ENCODE measurements at regions of chr20 and their contacts with region 1.

Region 1: DNA sequence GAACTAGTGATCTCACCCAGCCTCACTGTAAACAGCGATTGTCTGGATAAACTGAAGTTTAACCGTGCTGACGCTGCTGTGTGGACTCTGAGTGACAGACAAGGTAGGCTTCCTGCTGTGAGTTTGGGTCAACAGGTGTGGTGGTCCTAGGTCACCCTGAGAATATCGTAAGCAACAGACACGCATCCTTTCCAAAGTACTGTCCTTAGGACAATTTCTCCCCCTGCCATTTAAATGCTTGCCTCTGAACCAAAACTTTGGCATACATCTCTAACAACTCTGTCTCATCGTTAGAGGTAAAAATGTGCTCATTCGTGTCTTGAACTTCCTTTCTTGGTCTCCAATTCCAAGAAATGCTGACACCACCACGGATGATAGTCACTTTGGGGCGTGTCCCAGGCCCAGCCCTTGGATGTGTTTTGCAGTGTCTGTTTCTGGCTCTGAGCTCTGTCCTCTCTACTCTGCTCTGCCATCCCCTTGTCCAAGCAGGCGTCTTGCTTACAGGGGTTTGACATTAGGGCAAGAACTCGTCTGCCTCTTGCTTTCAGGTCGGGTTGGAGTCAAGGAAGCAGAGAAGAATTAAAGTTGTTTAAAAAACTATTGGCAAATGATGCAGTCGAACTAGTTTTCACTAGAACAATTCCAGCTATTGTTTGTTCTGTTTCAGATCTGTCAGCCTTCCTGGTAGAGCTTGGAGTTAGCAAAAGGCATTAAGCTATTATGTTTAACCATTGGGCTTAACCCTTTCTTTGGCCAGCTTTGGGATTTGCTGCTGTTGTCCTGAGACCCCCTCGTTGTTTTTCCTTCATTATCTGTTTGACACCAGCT is 95.6 kb downstream of the EYA2 start:
- DNase-seq: peak; percentile 73
- H3K4me3 Mint-ChIP-seq: peak overlapping the region; percentile 45
- H3K27ac Mint-ChIP-seq: peak overlapping the region; percentile 94
- H3K4me1 Mint-ChIP-seq: peaks cover 53% of the 10 kb centered on the region
- H3K27me3 Mint-ChIP-seq: peaks cover 14% of the 10 kb centered on the region

Region 2: GRCh38 chr20:46978951-46979491 is 11.2 kb before region 1 on chr20:
- CTCF ChIA-PET with region 1: interaction called, 15 read pairs
- POLR2A ChIA-PET with region 1: no interaction called
- DNase-seq: no peak
- H3K4me3 Mint-ChIP-seq: no peak overlapping the region
- H3K27ac Mint-ChIP-seq: no peak overlapping the region
- H3K4me1 Mint-ChIP-seq: peaks cover 37% of the 10 kb centered on the region
- H3K27me3 Mint-ChIP-seq: peaks cover 55% of the 10 kb centered on the region